ENCODE measurements at regions of chr3 and their contacts with region 1.

Region 1: GRCh38 chr3:88149509-88150362 is at the start of gene C3orf38:
- DNase-seq: peak; percentile 64 to 84
- H3K4me3 ChIP-seq: peak within 1 kb of the TSS; percentile 75 to 99 (median 96)
- H3K27ac ChIP-seq: peak within 1 kb of the TSS; percentile 97
- H3K4me1 ChIP-seq: no peaks in the 10 kb centered on the region
- H3K27me3 ChIP-seq: no peaks in the 10 kb centered on the region
- CTCF ChIP-seq: no peak
- EP300 ChIP-seq: no peak
- POLR2A ChIP-seq: peak; percentile 74 to 93
- RAD21 ChIP-seq: no peak
- total RNA-seq, gene C3orf38: 31.0 and 32.1 TPM in 2 replicates

Region 2: GRCh38 chr3:88038566-88038965 is 111.2 kb before region 1 on chr3:
- CTCF ChIA-PET with region 1: no interaction called
- POLR2A ChIA-PET with region 1: no interaction called
- DNase-seq: no peak
- H3K4me3 ChIP-seq: no peak overlapping the region
- H3K27ac ChIP-seq: no peak overlapping the region
- H3K4me1 ChIP-seq: no peaks in the 10 kb centered on the region
- H3K27me3 ChIP-seq: no peaks in the 10 kb centered on the region
- CTCF ChIP-seq: no peak
- EP300 ChIP-seq: no peak
- POLR2A ChIP-seq: no peak
- RAD21 ChIP-seq: no peak

Region 3: DNA sequence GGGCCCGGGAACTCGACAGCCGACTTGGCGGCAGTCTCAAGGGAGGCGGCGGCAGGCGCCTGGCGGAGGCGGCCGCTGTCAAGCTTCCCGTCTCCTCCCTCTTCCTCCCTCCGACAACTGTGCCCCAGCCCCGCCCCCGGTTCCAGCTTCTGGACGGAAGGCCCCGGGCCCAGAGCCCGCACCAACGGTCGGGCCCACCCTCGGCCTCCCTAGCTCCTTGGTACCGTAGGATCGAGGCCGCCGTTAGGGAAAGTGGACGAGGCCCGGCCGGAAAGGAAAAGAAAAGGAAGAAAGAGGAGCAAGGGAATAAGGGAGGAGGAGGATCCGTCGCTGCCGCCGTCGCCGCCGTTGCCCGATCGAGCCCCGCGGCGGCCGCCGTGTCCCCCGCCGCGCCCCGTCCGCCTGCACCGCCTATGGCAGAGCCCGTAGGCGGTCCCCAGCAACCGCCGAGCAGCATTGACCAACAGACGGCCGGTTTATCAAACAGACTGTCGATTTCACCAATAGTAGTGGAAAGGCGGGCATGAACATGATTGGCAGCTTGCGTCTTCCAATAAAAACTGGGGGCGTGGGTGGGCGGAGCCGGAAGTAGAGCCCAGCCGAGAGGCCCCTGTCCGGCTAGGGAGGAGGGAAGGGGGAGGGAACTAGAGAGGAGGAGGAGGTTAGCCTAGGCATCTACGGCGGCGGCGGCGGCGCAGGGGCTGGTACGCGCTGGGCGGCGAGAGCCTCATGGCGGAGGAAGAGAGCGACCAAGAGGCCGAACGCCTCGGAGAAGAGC is 91.0 kb before region 1 on chr3 and contains the starts of genes CGGBP1 and ZNF654:
- CTCF ChIA-PET with region 1: interaction called, 3 read pairs
- POLR2A ChIA-PET with region 1: interaction called, 17 read pairs
- DNase-seq: peak; percentile 94 to 98
- H3K4me3 ChIP-seq: peak within 1 kb of the TSS; percentile 83 to 96 (median 91)
- H3K27ac ChIP-seq: 0 out of 2 replicates have a peak within 1 kb of the TSS, but pooled peaks have one; percentile 41
- H3K4me1 ChIP-seq: peaks cover 0 to 3% (median 0%) of the 10 kb centered on the region in 4 experiments; a peak in 1 of 7 replicates
- H3K27me3 ChIP-seq: no peaks in the 10 kb centered on the region
- CTCF ChIP-seq: no peak
- EP300 ChIP-seq: peak in 1 of 2 experiments; percentile 22; a peak in 1 of 3 replicates
- POLR2A ChIP-seq: peak; percentile 62 to 70; a peak in 2 of 3 replicates
- RAD21 ChIP-seq: no peak
- total RNA-seq, gene CGGBP1: 57.1 and 61.4 TPM in 2 replicates
- total RNA-seq, gene ZNF654: 5.3 and 6.2 TPM in 2 replicates

Region 4: DNA sequence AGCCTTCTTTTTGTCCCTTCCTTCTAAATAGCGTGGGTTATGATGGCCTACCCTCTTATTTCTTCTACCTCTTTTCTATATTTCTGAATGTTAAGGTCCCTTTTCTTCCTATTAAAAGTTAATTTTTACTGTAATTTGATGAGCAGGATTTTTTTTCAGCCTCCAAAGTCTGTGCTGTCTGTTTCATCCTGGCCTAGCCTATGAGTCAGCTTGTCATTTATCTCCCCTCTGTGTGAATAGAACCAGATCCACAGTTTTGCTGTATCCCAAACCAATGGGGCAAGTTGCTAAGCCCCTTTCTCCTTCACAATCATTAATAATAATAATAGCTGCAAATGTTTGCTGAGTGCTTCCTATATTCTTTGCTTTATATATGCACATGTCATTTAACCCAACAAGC is 18.0 kb before region 1 on chr3:
- CTCF ChIA-PET with region 1: interaction called, 3 read pairs
- POLR2A ChIA-PET with region 1: interaction called, 19 read pairs
- DNase-seq: no peak
- H3K4me3 ChIP-seq: no peak overlapping the region
- H3K27ac ChIP-seq: no peak overlapping the region
- H3K4me1 ChIP-seq: no peaks in the 10 kb centered on the region
- H3K27me3 ChIP-seq: no peaks in the 10 kb centered on the region
- CTCF ChIP-seq: no peak
- EP300 ChIP-seq: no peak
- POLR2A ChIP-seq: no peak
- RAD21 ChIP-seq: no peak

Region 5: DNA sequence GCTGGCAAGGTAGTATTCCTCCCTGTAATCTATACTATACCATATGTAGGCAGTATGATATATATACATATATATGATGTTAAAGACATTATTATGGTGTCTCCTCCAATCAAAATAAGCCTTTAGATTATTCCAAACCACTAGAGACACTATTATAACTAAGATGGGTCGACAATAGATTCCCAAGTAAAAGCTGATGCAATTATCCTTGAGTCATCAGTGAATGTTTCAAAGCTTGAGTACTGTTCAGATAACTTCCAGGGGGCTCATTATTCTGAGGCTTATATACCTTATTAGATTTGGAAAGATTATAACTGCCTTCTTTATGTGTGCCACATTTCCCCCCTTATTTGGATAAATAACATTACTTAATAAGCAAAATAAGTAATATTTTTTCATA is 11.9 kb before region 1 on chr3:
- CTCF ChIA-PET with region 1: interaction called, 3 read pairs
- POLR2A ChIA-PET with region 1: interaction called, 19 read pairs
- DNase-seq: no peak
- H3K4me3 ChIP-seq: no peak overlapping the region
- H3K27ac ChIP-seq: no peak overlapping the region
- H3K4me1 ChIP-seq: no peaks in the 10 kb centered on the region; a peak in 1 of 7 replicates
- H3K27me3 ChIP-seq: no peaks in the 10 kb centered on the region
- CTCF ChIP-seq: no peak
- EP300 ChIP-seq: no peak
- POLR2A ChIP-seq: no peak
- RAD21 ChIP-seq: no peak

Measured in H1 (cell line).